ENCODE measurements at regions of chr10 and their contacts with region 1.

Region 1: GRCh38 chr10:102450194-102450938 is 977 bp downstream of the C10orf95 start:
- DNase-seq: no peak
- H3K4me3 ChIP-seq: peak overlapping the region; percentile 70
- CTCF ChIP-seq: no peak

Region 2: GRCh38 chr10:102432162-102432950 is 18.0 kb before region 1 on chr10 and contains the start of gene CUEDC2:
- CTCF ChIA-PET with region 1: no interaction called
- POLR2A ChIA-PET with region 1: interaction called, 15 read pairs
- DNase-seq: peak; percentile 61
- H3K4me3 ChIP-seq: peak within 1 kb of the TSS; percentile 90
- CTCF ChIP-seq: no peak